ENCODE measurements at regions of chr6 and their contacts with region 1.

Region 1: GRCh38 chr6:72212686-72213085 is 326.3 kb downstream of the RIMS1 start:
- DNase-seq: no peak
- ATAC-seq: no peak
- H3K4me3 Mint-ChIP-seq: no peak overlapping the region
- H3K27ac Mint-ChIP-seq: no peak overlapping the region
- H3K4me1 Mint-ChIP-seq: no peaks in the 10 kb centered on the region
- H3K27me3 Mint-ChIP-seq: peaks cover 2% of the 10 kb centered on the region
- CTCF ChIP-seq: no peak

Region 2: GRCh38 chr6:73937805-73938204 is 1725.1 kb after region 1 on chr6:
- CTCF ChIA-PET with region 1: no interaction called
- POLR2A ChIA-PET with region 1: no interaction called
- intact Hi-C with region 1: loop called (anchors 5 kb)
- DNase-seq: no peak
- ATAC-seq: no peak
- H3K4me3 Mint-ChIP-seq: no peak overlapping the region
- H3K27ac Mint-ChIP-seq: no peak overlapping the region
- H3K4me1 Mint-ChIP-seq: no peaks in the 10 kb centered on the region
- H3K27me3 Mint-ChIP-seq: no peaks in the 10 kb centered on the region
- CTCF ChIP-seq: no peak